Testis (tissue), 5 donors: ENCODE measurements at regions of chr2 and their contacts with region 1.

Region 1: DNA sequence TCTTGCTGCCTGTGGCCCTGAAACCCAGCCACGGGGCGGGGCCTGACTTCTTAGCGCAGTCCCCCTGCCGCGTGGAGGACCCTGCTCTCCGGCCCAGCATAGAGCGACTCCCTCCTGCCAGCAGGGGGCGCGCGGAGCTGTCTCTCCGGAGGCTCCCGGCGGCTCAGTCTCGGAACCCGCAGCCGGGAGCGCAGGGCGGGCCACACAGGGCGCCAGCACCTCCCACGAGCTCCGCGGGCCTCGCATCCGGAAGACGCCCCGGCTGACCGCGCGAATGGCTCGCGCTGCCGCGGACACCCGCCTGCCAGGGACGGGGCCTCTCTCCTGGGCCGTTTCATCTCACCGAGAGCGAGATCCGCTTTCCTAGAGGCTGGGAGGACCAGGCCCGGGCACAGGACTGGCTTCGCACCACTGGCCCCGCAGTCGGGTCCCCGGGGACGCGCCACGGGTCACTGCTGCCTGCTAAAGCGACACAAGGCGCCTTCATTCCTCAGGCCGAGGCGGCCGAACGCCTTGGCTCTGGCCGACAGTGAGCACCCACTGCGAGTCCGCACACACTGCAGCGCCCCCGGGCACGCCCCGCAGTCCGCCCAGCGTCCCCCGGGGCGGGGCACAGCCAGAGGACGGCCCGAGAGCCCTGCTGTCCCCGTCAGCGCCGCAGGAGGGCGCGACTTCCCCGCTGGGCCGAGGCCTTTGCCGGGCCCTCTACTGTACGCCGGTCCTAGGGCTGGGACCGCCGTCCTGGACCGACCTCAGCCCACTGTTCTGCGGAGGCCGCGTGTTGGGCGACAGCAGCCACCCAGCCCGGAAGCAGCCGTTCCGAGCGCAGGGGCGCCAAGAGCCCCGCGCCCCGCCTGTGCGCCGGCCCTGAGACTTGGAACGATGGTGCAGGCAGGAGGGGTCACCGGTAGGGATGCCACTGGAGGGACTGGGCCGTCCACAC is 39.0 kb upstream of the ARHGEF4 start:
- DNase-seq: peak; percentile 94
- H3K4me3 ChIP-seq: peak overlapping the region; percentile 77 to 90
- H3K27ac ChIP-seq: peak overlapping the region; percentile 91 to 92
- H3K4me1 ChIP-seq: no peaks in the 10 kb centered on the region
- H3K27me3 ChIP-seq: no peaks in the 10 kb centered on the region
- CTCF ChIP-seq: peak; percentile 85 to 94 (median 87)
- POLR2A ChIP-seq: no peak

Region 2: GRCh38 chr2:130873700-130874346 is 76.1 kb after region 1 on chr2:
- intact Hi-C with region 1: loop called (anchors 5 kb)
- DNase-seq: peak; percentile 83
- H3K4me3 ChIP-seq: no peak overlapping the region
- H3K27ac ChIP-seq: no peak overlapping the region
- H3K4me1 ChIP-seq: no peaks in the 10 kb centered on the region
- H3K27me3 ChIP-seq: no peaks in the 10 kb centered on the region
- CTCF ChIP-seq: peak in 2 of 3 experiments; percentile 39 to 64
- POLR2A ChIP-seq: no peak